HEK293 (cell line): ENCODE measurements at regions of chr12 and their contacts with region 1.

Region 1: GRCh38 chr12:82685790-82686167 is 927 bp upstream of the TMTC2 start:
- H3K4me3 ChIP-seq: peak overlapping the region; percentile 96
- H3K27ac ChIP-seq: peak overlapping the region; percentile 89
- H3K4me1 ChIP-seq: peaks cover 17% of the 10 kb centered on the region
- CTCF ChIP-seq: peak; percentile 94

Region 2: DNA sequence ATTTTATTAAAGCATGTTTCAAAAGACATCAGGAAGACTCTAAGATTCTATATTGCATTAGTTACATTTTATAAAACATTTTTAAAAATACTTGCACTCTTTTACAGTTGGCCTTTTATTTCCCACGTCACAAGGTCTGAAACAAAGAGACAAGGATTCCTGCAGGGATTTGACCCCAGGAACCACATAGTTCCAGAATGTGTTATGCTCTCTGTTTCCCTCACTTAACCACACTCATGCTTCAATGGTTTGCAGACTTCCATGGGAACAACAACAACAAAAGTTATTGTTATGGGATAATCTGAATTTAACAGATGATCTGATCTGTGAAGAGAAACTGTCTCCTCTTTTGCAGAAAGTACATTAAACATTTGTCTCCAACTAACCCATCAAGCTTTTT is 822.4 kb before region 1 on chr12:
- CTCF ChIA-PET with region 1: no interaction called
- POLR2A ChIA-PET with region 1: no interaction called
- H3K4me3 ChIP-seq: no peak overlapping the region
- H3K27ac ChIP-seq: no peak overlapping the region
- H3K4me1 ChIP-seq: no peaks in the 10 kb centered on the region
- CTCF ChIP-seq: no peak

Region 3: GRCh38 chr12:82524636-82525035 is 161.1 kb before region 1 on chr12:
- CTCF ChIA-PET with region 1: interaction called, 10 read pairs
- POLR2A ChIA-PET with region 1: no interaction called
- H3K4me3 ChIP-seq: no peak overlapping the region
- H3K27ac ChIP-seq: no peak overlapping the region
- H3K4me1 ChIP-seq: no peaks in the 10 kb centered on the region
- CTCF ChIP-seq: no peak

Region 4: DNA sequence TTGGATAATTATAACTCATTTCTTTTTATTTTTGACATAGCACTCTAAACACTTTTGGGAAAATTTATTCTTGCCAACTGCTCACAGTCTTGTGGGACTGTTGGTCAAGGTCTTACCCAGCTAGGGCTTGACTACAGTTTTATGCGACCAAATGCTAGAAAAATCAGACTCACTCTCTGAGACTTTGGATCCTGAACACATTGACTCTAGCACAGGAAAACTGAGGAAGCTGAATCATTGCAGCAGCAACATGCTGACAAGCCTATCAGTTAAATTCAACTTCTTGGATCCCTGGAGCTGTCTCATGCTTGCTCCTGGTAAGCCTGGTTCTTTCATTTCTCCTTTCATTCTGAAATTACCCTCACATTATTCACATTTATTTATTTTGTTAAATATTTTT is 119.8 kb before region 1 on chr12:
- CTCF ChIA-PET with region 1: no interaction called
- POLR2A ChIA-PET with region 1: no interaction called
- H3K4me3 ChIP-seq: no peak overlapping the region
- H3K27ac ChIP-seq: no peak overlapping the region
- H3K4me1 ChIP-seq: no peaks in the 10 kb centered on the region
- CTCF ChIP-seq: no peak

Region 5: DNA sequence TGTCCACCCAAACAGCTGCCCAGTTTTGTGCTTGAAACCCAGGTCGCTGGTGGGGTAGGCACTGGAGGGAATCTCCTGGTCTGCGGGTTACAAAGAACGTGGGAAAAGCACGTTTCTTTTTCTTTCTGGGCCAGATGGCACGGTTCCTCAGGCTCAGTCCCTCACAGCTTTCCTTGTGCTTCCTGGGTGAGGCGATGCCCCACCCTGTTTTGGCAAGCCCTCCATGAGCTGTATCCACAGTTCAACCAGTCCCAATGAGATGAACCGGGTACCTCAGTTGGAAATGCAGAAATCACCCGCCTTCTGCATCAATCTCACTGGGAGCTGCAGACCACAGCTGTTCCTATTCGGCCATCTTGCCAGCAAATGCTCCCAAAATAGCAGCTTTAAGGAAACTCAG is 50.5 kb before region 1 on chr12:
- CTCF ChIA-PET with region 1: interaction called, 11 read pairs
- POLR2A ChIA-PET with region 1: interaction called, 3 read pairs
- H3K4me3 ChIP-seq: no peak overlapping the region
- H3K27ac ChIP-seq: no peak overlapping the region
- H3K4me1 ChIP-seq: no peaks in the 10 kb centered on the region
- CTCF ChIP-seq: no peak

Region 6: DNA sequence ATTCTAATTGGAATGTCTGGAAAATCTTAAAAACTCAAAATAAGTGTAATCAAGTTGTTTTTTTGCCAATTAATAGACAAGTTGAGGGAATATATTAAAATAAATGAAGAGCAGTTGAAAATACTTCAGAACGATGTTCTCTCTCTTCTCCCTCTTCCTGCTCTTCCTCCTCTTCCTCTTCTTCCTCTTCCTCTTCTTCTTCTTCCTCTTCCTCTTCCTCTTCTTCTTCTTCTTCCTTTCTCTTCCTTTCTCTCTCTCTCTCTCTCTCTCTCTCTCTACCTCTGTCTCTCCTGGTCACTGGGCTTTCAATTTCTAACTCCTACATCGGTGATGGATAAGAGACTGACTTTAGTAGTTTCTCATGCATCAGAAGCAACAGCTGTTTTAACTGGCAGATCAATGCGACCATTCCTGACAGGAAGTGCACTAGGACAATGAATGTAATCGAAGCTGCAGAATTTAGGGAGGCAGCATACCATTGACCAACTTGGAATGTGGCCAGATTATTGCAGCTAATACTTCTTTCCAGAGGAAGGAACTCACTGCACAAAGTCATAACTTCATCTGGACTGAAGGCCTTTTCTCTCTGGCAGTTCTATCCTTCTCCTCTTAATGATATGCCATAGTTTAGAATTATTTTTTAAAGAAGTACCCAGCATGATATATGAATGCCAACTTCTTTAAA is 12.8 kb before region 1 on chr12:
- CTCF ChIA-PET with region 1: interaction called, 19 read pairs
- POLR2A ChIA-PET with region 1: interaction called, 3 read pairs
- H3K4me3 ChIP-seq: no peak overlapping the region
- H3K27ac ChIP-seq: no peak overlapping the region
- H3K4me1 ChIP-seq: no peaks in the 10 kb centered on the region
- CTCF ChIP-seq: no peak

Region 7: DNA sequence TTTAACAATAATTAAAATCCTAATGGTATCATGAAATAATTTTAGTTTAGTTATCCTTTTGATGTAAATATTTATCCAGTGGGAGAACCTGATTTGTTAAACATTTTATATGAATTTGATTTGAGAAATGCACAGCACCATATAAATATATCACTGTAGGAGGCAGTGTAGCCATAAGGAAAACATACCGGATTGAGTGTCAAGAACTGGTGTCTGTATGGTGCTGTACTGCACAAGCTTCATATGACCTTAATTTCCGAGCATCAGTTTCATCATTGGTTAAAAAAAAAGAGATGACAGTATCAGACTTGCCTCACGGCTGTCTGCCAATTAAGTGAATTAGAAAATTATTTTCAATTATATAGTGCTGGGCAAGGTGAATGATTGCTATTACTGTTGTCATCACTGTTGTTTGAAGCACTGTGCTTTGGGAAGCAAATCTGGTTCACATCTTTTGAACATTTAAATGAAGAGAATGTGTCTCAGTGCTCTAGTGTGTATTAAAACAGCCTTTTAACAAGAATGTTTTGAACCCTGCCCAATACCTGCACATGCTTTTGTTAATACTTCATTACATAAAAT is 73.1 kb after region 1 on chr12:
- CTCF ChIA-PET with region 1: interaction called, 11 read pairs
- POLR2A ChIA-PET with region 1: no interaction called
- H3K4me3 ChIP-seq: no peak overlapping the region
- H3K27ac ChIP-seq: no peak overlapping the region
- H3K4me1 ChIP-seq: peaks cover 26% of the 10 kb centered on the region
- CTCF ChIP-seq: no peak

Region 8: DNA sequence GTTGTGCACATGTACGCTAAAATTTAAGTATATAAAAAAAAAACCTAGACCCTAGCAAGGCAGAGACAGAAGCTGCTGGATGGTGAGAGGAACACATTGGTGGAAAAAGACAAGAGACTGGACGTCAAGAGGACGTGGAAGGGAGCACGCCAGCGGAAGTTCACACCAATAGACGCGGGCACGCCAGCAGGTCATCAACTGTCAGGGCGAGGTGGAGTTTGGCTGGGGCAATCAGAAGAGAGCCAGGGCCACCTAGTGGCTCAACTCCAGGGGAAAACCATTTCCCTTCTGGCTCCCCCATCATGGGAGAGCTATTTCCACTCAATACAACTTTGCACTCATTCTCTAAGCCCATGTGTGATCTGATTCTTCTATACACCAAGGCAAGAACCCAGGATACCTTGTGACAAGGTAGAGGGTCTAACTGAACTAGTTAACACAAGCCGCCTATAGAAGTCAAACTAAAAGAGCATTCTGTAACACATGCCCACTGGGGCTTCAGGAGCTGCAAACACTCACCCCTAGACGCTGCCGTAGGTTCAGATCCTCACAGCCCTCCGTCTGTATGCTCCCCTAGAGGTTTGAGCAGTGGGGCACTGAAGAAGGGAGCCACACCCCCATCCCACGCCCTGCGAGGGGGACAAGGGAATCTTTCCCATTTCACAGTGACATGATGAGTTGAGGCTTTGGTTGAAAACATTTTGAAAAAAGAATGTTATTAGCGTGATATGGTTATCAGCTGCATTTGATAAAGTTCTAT is 703.6 kb after region 1 on chr12:
- CTCF ChIA-PET with region 1: interaction called, 11 read pairs
- POLR2A ChIA-PET with region 1: no interaction called
- H3K4me3 ChIP-seq: no peak overlapping the region
- H3K27ac ChIP-seq: no peak overlapping the region
- H3K4me1 ChIP-seq: no peaks in the 10 kb centered on the region
- CTCF ChIP-seq: peak; percentile 52; the same call in 1 of the 2 replicates

Region 9: GRCh38 chr12:83823431-83823963 is 1137.7 kb after region 1 on chr12:
- CTCF ChIA-PET with region 1: interaction called, 24 read pairs
- POLR2A ChIA-PET with region 1: no interaction called
- H3K4me3 ChIP-seq: no peak overlapping the region
- H3K27ac ChIP-seq: no peak overlapping the region
- H3K4me1 ChIP-seq: no peaks in the 10 kb centered on the region
- CTCF ChIP-seq: no peak